Calu3 (cell line): ENCODE measurements at regions of chr6 and their contacts with region 1.

Region 1: DNA sequence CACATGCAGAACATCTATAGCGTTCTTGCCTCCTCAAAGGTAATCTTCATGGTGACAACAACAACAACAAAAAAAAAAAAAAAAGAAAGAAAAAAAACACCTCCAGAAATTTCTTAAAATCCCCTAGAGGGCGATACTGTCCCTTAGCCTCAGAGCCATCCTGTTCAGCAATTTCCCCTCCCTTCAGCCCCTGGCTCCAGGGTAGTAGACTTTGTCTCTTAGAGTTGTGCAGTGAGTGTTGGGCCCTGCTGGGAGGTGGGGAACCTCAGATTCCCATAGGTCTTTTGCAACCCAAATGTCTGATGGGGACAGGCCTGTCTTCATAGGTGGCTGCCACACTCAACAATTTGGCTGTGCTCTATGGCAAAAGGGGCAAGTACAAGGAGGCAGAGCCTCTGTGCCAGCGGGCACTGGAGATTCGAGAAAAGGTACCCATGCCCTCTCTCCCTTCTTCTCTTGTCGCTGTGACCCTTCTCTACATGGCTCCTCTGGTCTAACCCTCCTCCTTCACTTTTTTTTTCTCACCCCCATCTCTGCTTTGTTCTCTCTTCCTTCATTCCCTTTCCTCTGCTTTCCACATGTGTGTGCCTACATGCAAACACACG is 6.0 kb upstream of the PTK7 start:
- DNase-seq: peak; percentile 52
- H3K4me3 Mint-ChIP-seq: no peak overlapping the region
- H3K27ac Mint-ChIP-seq: no peak overlapping the region
- H3K4me1 Mint-ChIP-seq: no peaks in the 10 kb centered on the region
- H3K27me3 Mint-ChIP-seq: no peaks in the 10 kb centered on the region
- CTCF ChIP-seq: peak; percentile 74

Region 2: DNA sequence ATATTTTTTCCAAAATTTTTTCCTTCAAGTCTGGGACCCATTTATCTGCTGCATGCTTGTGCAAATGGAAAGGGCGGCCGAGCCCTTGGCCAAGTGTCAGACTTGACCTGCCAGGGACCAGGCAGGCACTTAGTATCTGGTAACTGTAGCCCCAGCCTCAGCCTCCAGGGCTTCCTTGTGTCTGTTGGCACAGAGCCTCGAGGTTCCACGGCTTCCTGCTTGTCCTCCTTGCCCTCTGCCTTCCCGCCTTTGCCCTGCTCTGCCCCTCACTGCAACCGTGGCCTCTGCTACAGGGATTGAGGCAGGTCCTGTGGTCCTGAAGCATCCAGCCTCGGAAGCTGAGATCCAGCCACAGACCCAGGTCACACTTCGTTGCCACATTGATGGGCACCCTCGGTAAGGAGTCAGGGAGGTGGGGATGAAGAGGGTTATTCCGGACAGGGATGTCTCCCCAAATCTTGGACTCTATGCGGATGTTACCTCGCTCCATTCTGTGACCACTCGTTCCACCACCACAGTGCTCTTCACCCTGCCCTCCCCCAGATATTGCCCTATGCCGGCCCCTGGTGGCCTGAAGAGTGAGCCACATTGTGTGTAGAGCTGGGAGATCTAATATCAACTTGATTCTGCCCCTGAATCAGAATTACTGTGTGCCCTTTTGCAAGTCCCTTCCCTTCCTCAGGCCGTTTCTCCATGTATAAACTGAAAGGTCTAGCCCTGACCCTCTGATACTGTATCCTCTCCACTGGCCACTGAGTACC is 59.5 kb after region 1 on chr6:
- CTCF ChIA-PET with region 1: interaction called, 3 read pairs
- intact Hi-C with region 1: loop called (anchors 1 kb)
- DNase-seq: peak; percentile 72
- H3K4me3 Mint-ChIP-seq: no peak overlapping the region
- H3K27ac Mint-ChIP-seq: no peak overlapping the region
- H3K4me1 Mint-ChIP-seq: peaks cover 8% of the 10 kb centered on the region
- H3K27me3 Mint-ChIP-seq: no peaks in the 10 kb centered on the region
- CTCF ChIP-seq: peak; percentile 73

Region 3: DNA sequence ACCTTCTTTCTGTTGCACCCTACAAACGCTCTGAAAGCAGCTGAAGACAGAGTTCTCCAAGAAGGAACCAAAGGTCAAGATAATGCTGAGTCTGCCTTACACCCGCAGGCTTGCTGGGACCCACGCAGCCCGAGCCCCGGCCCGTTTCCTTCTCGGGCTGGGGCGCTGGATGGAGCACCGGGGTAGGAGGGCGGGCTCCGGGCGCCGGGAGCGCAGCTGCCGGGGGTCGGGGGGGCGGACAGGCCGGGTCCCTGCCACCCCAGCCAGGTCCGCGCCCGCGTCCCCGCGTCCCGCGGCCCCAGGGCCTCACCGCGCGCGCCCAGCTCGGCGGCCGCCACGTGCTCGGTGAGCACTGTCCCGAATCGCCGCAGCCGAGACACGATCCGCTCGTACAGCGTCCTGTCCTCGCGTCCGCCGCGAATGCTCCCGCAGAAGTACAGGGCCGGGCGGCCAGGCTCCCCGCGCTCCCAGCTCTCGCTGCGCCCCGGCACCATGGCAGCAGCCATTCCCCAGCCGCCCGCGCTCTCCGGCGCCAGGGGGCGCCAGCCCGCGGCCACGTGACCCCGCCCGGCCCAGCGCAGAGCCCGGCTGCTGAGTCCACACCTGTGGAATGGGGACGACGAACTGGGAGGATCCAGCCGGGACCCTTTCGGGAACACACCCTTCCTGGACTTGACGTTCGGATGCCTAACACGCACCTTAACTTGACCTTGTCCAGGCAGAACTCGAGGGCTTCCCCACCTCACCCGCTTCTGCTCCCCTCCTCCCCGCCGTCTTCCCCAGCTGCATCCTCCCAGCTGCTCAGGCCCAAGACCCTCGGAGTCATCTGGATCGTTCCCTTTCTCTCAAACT is 159.0 kb after region 1 on chr6 and contains the start of gene DNPH1:
- CTCF ChIA-PET with region 1: no interaction called
- intact Hi-C with region 1: no loop called
- DNase-seq: peak; percentile 96
- H3K4me3 Mint-ChIP-seq: peak within 1 kb of the TSS; percentile 75
- H3K27ac Mint-ChIP-seq: peak within 1 kb of the TSS; percentile 88
- H3K4me1 Mint-ChIP-seq: peaks cover 22% of the 10 kb centered on the region
- H3K27me3 Mint-ChIP-seq: peaks cover 26% of the 10 kb centered on the region
- CTCF ChIP-seq: peak; percentile 99
- total RNA-seq, gene DNPH1: 82.6 and 86.8 TPM in 2 replicates